PC-3 (cell line): ENCODE measurements at regions of chr14 and their contacts with region 1.

Region 1: DNA sequence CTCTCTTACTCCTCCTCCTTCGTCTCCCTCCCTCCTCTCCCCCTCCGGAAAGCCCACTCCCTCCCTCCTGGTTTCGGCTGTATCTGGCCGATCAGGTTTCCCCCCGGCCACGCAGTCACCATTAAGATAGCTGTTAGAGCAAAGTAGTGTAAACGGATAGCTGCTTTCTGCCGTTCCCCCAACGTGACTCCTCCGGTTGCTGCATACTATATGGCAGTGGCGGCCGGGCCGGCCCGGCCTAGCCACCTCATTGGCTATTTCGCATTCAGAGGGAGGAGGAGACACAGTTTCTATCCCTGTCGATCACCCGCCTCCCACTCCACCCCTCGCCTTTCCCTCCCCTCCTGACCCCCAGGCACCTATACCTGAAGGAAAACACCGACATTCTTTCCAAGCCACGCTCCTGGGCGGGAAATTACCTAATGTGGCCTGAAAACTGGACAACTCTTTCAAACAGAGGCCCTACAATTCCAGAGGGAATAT is at the start of gene SIX4:
- DNase-seq: peak; percentile 98
- ATAC-seq: peak; percentile 70
- H3K4me3 ChIP-seq: peak within 1 kb of the TSS; percentile 86
- H3K27ac ChIP-seq: peak within 1 kb of the TSS; percentile 38
- H3K4me1 ChIP-seq: peaks cover 20% of the 10 kb centered on the region
- H3K27me3 ChIP-seq: no peaks in the 10 kb centered on the region
- CTCF ChIP-seq: no peak
- total RNA-seq, gene SIX4: 29.2 and 33.2 TPM in 2 replicates

Region 2: GRCh38 chr14:60656686-60657455 is 67.3 kb before region 1 on chr14:
- CTCF ChIA-PET with region 1: interaction called, 7 read pairs
- POLR2A ChIA-PET with region 1: interaction called, 39 read pairs
- intact Hi-C with region 1: loop called (anchors 1 kb)
- DNase-seq: peak; percentile 76
- ATAC-seq: peak; percentile 59
- H3K4me3 ChIP-seq: peak overlapping the region; percentile 80
- H3K27ac ChIP-seq: peak overlapping the region; percentile 19
- H3K4me1 ChIP-seq: peaks cover 31% of the 10 kb centered on the region
- H3K27me3 ChIP-seq: no peaks in the 10 kb centered on the region
- CTCF ChIP-seq: peak; percentile 83

Region 3: GRCh38 chr14:60753264-60754119 is 29.3 kb after region 1 on chr14:
- CTCF ChIA-PET with region 1: no interaction called
- POLR2A ChIA-PET with region 1: no interaction called
- intact Hi-C with region 1: no loop called
- DNase-seq: no peak
- ATAC-seq: no peak
- H3K4me3 ChIP-seq: no peak overlapping the region
- H3K27ac ChIP-seq: no peak overlapping the region
- H3K4me1 ChIP-seq: peaks cover 30% of the 10 kb centered on the region
- H3K27me3 ChIP-seq: no peaks in the 10 kb centered on the region
- CTCF ChIP-seq: no peak

Region 4: DNA sequence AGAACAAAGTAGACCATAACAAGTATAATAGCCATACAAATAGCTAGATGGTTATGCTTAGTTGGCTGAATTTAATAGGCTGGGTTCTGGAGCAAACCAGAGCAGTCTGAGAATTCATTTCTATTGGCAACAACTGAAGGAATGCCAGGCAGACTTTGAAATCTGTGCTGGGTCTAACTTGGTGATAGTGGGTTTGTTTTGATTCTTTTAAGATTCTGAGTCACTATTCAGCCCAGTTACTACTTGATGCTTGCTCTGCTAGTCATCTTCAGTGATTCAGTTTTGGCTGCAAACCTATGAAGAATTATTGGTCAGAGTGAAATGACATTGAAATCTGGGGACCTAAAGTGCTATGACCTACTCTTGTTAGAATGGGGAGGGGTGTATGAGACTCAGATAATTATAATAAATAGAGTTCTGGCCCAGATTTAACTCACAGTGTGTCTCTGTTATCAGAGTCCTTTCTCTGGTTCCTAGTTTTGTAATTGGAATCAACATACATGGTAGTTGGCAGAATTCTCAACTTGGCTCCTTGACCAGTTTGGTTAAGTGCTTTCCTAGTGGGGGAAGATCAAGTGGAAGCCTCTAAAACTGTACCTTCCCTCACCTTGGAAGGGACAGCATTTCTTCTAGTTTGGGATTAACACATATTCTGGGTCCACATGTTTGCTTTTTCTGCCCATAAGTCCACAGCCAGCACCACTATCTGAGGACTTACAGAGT is 53.8 kb after region 1 on chr14:
- CTCF ChIA-PET with region 1: no interaction called
- POLR2A ChIA-PET with region 1: no interaction called
- intact Hi-C with region 1: loop called (anchors 5 kb)
- DNase-seq: peak; percentile 91
- ATAC-seq: peak; percentile 76
- H3K4me3 ChIP-seq: no peak overlapping the region
- H3K27ac ChIP-seq: peak overlapping the region; percentile 15
- H3K4me1 ChIP-seq: peaks cover 44% of the 10 kb centered on the region
- H3K27me3 ChIP-seq: no peaks in the 10 kb centered on the region
- CTCF ChIP-seq: no peak

Region 5: GRCh38 chr14:60965402-60965801 is 241.2 kb after region 1 on chr14:
- CTCF ChIA-PET with region 1: no interaction called
- POLR2A ChIA-PET with region 1: no interaction called
- intact Hi-C with region 1: loop called (anchors 1 kb)
- DNase-seq: peak; percentile 66
- ATAC-seq: peak; percentile 92
- H3K4me3 ChIP-seq: no peak overlapping the region
- H3K27ac ChIP-seq: peak overlapping the region; percentile 27
- H3K4me1 ChIP-seq: peaks cover 5% of the 10 kb centered on the region; the same call in 1 of the 2 replicates
- H3K27me3 ChIP-seq: no peaks in the 10 kb centered on the region
- CTCF ChIP-seq: no peak

Region 6: GRCh38 chr14:61196792-61197191 is 472.6 kb after region 1 on chr14:
- CTCF ChIA-PET with region 1: interaction called, 3 read pairs
- POLR2A ChIA-PET with region 1: no interaction called
- intact Hi-C with region 1: loop called (anchors 5 kb)
- DNase-seq: peak; percentile 66
- ATAC-seq: peak; percentile 95
- H3K4me3 ChIP-seq: no peak overlapping the region
- H3K27ac ChIP-seq: no peak overlapping the region
- H3K4me1 ChIP-seq: no peaks in the 10 kb centered on the region
- H3K27me3 ChIP-seq: no peaks in the 10 kb centered on the region
- CTCF ChIP-seq: peak; percentile 76